ENCODE measurements at regions of chr6 and their contacts with region 1.

Region 1: GRCh38 chr6:31366693-31367470 is 9.9 kb upstream of the HLA-B start:
- DNase-seq: peak; percentile 90

Region 2: DNA sequence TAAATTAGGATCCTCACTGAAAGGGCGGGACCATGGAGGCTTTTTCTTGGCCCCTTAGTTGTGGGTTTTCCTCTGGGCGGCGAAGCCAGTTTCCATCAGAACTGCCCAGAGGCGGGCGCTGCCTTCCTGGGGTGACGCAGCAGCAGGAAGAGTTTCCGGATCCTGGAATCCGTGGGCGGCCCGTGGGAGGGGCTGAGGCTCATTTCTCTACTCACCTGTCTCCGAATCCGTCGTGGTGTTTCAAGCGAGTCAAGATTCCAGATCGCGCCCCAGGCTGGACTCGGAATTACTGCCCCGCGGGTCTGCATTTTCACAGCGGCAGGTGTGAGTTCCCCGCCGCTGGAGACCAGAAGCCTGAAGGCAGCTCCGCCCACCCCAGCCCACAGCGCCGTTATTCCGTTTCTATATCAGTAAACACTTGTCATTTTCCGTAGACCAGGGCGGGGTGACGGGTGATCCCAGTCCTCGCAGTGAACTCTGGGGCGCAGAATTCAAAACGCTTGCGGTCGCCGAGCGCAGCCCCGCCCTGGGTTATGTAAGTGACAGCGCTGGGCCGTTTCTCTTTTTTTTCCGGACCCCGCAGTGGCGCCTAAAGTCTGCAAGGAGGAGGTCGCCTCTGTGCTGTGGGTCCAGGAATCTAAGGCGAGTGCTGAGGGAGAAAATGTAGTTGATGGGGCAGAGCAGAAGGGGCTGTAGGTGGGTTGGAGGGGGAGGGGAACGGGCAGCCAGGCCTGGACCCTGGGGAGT is 169.2 kb before region 1 on chr6:
- CTCF ChIA-PET with region 1: interaction called, 20 read pairs
- POLR2A ChIA-PET with region 1: interaction called, 12 read pairs
- DNase-seq: peak; percentile 51

Region 3: GRCh38 chr6:31350196-31351032 is 16.5 kb before region 1 on chr6:
- CTCF ChIA-PET with region 1: no interaction called
- POLR2A ChIA-PET with region 1: no interaction called
- DNase-seq: no peak

Region 4: GRCh38 chr6:31580807-31581433 is 214.0 kb after region 1 on chr6:
- CTCF ChIA-PET with region 1: no interaction called
- POLR2A ChIA-PET with region 1: no interaction called
- DNase-seq: peak; percentile 96